Dorsolateral prefrontal cortex (tissue), 120 donors: ENCODE measurements at regions of chr1 and their contacts with region 1.

Region 1: DNA sequence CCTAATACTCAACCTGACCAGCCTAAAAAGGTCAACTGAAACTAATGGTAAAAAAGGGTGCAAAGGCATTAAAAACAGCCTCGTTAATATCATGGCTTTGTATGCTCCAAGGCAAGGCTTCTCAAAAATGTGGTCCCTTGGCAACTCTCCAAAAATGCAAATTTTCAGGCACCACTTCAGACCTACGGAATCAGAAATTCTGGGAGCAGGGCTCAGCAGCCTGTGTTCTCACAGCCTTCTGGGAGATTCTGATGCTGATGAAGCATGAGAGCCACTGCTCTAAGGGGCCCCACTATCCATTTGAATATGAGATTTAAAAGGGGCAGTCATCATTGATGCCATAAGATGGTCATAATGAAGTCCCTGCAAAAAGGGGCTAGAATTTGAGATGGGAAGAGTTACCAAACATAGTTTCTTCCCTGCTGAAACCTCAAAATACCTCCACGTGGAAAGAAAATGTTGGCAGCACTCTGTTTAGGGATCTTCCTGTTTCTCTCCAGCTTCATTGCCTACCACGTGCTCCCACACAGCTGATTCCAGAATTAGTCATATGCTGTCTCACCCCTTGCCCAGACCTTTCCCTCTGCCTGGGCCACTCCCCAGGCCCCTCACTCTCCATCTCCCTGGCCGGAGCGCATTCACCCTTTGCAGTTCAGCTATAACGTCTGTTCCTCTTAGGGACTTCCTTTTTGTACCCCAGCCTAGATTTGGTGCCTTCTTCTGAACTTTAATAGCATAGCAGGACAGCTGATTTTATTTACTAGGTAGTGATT is 46.7 kb downstream of the PHC2 start:
- DNase-seq: no peak
- H3K4me3 ChIP-seq: no peak overlapping the region
- H3K27ac ChIP-seq: peak overlapping the region in 57 of 59 donors; percentile 49 to 98 (median 92)
- H3K27me3 ChIP-seq: no peaks in the 10 kb centered on the region
- CTCF ChIP-seq: no peak

Region 2: DNA sequence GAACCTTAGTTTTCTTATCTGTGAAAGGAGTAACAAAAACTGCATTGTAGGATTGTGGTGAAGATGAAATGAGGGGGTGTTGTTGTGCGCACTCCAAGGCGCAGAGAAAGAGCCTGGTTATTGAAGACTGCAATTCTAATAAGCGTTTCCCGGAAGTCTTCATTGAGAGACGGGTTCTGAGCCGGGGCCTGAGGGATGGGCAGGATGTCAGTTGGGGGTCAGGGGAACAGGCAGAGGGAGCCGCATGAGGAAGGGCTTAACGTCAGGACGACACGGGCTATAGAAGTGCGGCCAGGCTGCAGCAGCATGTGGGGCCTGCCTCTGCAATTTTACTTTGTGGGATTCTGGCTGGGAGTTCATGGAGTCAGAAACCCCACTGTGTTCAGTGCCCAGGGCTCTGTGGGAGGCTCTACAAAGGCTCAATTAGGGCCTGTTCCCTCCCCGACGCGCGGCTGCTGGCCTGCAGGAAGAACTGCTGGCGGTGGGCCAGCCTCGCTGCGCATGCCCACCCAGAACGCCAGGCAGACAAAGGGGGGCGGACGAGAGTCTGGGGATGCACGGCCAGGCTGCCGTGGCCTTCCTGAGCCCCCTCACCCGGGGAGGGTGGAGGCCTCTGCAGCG is 223.1 kb before region 1 on chr1:
- intact Hi-C with region 1: no loop called
- DNase-seq: peak; percentile 67 to 89 (median 82)
- H3K4me3 ChIP-seq: peak overlapping the region in 28 of 59 donors; percentile 5 to 48 (median 23)
- H3K27ac ChIP-seq: peak overlapping the region; percentile 52 to 96 (median 87)
- H3K27me3 ChIP-seq: no peaks in the 10 kb centered on the region
- CTCF ChIP-seq: peak in 27 of 56 donors; percentile 2 to 45 (median 21)

Region 3: DNA sequence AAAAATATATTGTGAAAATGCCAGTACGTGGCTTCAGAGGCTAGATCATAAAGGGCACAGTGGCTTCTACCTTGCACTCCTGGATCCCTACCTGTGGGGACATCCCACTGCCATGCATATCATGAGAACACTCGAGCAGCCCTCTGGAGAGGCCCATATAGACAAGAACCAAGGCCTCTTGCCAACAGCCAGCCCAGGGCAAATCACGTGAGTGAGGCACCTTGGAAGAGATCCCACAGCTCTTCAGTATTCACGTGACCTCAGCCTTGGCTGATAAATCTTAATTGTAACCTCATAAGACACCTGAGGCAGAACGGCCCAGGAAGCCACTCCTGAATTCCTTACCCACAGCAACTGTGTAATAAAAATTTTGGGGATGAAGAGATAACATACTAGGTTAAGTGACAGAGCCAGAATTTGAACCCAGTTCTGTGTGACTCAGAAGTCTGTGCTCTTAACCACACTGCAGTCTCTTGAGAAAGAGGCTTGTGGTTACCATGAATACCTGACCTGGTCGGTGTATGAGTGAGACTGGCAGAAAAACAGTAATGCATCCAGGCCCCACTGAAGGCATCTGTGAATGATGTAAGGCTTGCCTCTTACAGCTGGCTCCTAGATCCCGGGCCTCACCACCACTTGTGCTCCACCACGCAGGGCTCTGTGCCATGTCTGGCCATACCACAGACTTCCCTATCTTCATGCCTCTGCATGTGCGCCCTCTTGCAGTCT is 56.5 kb before region 1 on chr1:
- intact Hi-C with region 1: no loop called
- DNase-seq: peak in 8 of 10 donors; percentile 42 to 71 (median 60)
- H3K4me3 ChIP-seq: no peak overlapping the region
- H3K27ac ChIP-seq: peak overlapping the region in 54 of 59 donors; percentile 13 to 97 (median 64)
- H3K27me3 ChIP-seq: no peaks in the 10 kb centered on the region
- CTCF ChIP-seq: peak in 4 of 56 donors; percentile 8 to 14 (median 11)

Region 4: GRCh38 chr1:33430692-33431593 is 46.7 kb after region 1 on chr1 and contains the start of gene PHC2:
- intact Hi-C with region 1: loop called (anchors 2 to 5 kb)
- DNase-seq: peak; percentile 99 to 100 (median 100)
- H3K4me3 ChIP-seq: peak within 1 kb of the TSS; percentile 36 to 92 (median 81)
- H3K27ac ChIP-seq: peak within 1 kb of the TSS in 55 of 59 donors; percentile 7 to 91 (median 74)
- H3K27me3 ChIP-seq: no peaks in the 10 kb centered on the region
- CTCF ChIP-seq: peak in 53 of 56 donors; percentile 14 to 72 (median 47)
- total RNA-seq, gene PHC2: 68.2 to 158 (median 93.1) TPM